Calu3 (cell line): ENCODE measurements at regions of chr7 and their contacts with region 1.

Region 1: DNA sequence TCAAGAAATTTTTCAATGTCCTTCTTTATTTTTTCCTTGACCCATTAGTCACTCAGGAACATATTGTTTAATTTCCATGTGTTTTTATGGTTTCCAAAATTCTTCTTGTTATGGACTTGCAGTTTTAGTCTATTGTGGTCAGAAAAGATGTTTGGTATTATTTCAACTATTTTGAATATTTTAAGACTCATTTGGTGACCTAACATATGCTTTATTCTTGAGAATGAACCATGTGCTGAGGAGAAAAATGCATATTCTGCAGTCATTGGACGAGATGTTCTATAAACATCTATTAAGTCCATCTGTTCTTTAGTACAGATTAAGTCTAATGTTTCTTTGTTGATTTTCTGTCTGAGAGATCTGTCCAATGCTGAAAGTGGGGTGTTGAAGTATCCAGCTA is 42.3 kb upstream of the MDFIC start:
- DNase-seq: no peak
- H3K4me3 Mint-ChIP-seq: no peak overlapping the region
- H3K27ac Mint-ChIP-seq: no peak overlapping the region
- H3K4me1 Mint-ChIP-seq: peaks cover 2% of the 10 kb centered on the region
- H3K27me3 Mint-ChIP-seq: no peaks in the 10 kb centered on the region
- CTCF ChIP-seq: no peak

Region 2: DNA sequence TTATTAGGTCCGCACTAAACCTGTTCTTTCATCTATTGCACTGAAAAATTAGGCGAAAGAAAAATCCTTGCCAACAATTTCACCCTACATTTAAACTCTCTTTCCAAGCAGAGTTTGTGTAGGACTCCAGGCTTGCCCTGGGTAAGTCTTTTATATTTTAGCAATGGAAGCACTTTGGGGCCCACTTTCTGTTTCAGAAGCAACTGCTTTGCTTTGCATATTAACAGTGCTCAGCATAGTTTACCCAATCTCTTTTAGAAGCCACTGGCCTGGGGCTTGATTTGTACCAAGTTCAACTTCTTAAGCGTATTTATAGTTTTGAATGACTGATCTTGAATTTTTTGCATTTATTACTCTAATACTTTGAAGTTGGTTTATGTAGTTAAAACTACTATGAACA is 36.5 kb before region 1 on chr7:
- CTCF ChIA-PET with region 1: no interaction called
- intact Hi-C with region 1: no loop called
- DNase-seq: no peak
- H3K4me3 Mint-ChIP-seq: no peak overlapping the region
- H3K27ac Mint-ChIP-seq: no peak overlapping the region
- H3K4me1 Mint-ChIP-seq: no peaks in the 10 kb centered on the region
- H3K27me3 Mint-ChIP-seq: no peaks in the 10 kb centered on the region
- CTCF ChIP-seq: no peak

Region 3: GRCh38 chr7:114889646-114890285 is 10.2 kb after region 1 on chr7:
- CTCF ChIA-PET with region 1: no interaction called
- intact Hi-C with region 1: no loop called
- DNase-seq: no peak
- H3K4me3 Mint-ChIP-seq: no peak overlapping the region
- H3K27ac Mint-ChIP-seq: peak overlapping the region; percentile 40
- H3K4me1 Mint-ChIP-seq: no peaks in the 10 kb centered on the region
- H3K27me3 Mint-ChIP-seq: no peaks in the 10 kb centered on the region
- CTCF ChIP-seq: no peak

Region 4: DNA sequence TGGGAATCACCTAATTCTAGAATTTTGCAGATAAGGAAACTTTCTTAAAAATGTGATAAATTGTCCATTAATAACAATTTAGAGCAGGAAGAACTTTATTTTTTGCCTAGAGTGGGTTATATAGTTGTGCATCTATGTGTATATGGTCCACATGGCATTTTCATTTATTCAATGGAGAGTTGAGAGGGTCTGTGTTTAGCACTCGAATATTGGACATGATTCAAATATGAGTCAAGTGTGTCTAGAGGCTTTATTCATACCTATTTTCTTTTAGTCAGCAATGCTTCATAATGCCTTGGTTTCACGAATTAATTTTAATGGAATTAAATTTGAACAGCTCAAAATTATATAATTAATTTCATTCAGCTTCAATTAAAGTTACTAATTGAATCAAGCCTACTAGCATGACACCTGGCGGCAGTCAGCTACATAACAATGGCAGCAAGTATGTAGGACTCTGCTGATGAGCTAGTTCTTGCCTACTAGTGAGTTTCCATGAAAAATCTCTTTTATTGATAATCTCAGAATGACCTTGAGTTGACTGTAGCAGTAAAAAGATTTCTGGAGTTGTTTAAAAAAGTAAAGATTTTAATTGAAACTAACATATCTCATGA is 60.0 kb after region 1 on chr7:
- CTCF ChIA-PET with region 1: no interaction called
- intact Hi-C with region 1: no loop called
- DNase-seq: no peak
- H3K4me3 Mint-ChIP-seq: no peak overlapping the region
- H3K27ac Mint-ChIP-seq: no peak overlapping the region
- H3K4me1 Mint-ChIP-seq: no peaks in the 10 kb centered on the region
- H3K27me3 Mint-ChIP-seq: no peaks in the 10 kb centered on the region
- CTCF ChIP-seq: no peak

Region 5: DNA sequence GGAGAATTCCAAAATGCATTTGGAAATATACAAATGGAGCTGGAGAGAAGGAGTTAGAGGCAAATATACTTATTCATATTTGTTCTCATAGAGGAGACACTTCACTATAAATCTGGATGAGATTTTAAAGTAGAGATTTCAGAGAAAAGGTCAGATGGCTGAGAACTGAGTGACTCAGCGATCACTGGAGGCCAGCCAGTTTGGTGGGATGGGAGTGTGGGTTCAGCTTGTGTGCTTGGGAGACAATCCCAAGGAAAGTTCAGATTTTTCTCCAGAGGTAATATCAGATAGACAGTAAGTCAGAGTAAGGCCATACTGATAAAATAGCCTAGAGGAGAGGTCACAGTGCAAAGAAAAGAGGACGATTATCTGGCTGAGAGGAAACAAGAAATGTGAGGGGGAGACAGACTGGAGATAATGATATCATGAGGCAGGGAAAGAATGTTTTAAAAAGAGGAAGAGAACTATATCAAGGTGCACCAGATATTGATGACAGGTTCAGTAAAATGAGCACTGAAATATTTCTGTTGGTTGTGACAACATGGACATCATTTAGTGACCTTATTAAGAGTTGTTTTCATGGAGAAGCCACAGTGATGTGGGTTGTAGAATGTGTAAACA is 109.3 kb after region 1 on chr7:
- CTCF ChIA-PET with region 1: no interaction called
- intact Hi-C with region 1: loop called (anchors 10 kb)
- DNase-seq: peak; percentile 37
- H3K4me3 Mint-ChIP-seq: no peak overlapping the region
- H3K27ac Mint-ChIP-seq: no peak overlapping the region
- H3K4me1 Mint-ChIP-seq: peaks cover 22% of the 10 kb centered on the region
- H3K27me3 Mint-ChIP-seq: no peaks in the 10 kb centered on the region
- CTCF ChIP-seq: no peak